Body of pancreas (tissue), 4 donors: ENCODE measurements at regions of chr14 and their contacts with region 1.

Region 1: DNA sequence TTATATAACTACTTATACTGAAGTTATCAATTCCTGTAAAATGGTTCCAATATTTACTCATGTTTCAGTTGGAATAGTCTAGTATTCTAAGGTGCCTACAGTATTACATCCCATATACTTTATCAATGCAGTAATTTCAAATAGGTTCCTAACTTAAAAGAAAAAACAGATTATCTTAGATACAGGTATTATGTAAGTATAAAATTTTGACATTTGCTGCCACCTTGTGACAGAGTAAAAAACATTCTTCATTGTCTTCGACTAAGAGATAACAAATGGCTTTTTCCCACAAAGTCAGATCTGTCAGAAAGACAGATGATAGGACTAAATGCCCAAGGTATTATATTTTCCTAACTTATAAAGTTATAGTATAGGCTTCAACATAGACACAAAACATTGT is 78.7 kb downstream of the TXNDC16 start:
- DNase-seq: no peak
- ATAC-seq: no peak
- H3K4me3 ChIP-seq: no peak overlapping the region
- H3K27ac ChIP-seq: no peak overlapping the region
- H3K4me1 ChIP-seq: no peaks in the 10 kb centered on the region
- H3K27me3 ChIP-seq: no peaks in the 10 kb centered on the region
- CTCF ChIP-seq: peak in 6 of 7 experiments; percentile 5 to 34 (median 20)
- POLR2A ChIP-seq: no peak

Region 2: DNA sequence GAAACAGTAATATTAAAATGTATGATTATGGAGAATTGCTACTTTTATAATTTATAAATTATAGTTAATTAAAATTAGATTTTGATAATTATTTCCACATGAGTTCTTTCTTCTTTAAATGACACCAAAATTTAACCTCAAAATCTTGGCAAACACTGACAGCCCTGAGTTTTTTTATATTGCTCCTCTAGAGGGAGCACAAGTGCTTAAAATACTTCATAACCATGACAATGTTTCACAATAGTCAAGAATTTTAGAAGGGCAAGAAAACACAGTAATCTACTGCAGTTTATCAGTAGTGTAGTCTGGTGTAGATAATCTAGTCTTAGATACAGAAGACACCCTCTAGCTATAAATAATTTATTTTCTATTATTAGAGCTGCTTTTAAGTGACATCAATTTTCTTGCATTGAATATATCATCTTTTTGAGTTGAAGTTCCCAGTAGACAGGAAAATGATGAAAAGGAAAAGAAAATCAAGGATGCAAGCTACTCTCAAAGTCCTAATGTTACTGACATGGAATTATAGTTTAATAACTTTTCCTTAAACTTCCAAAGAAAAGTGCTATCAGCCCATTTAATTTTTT is 173.8 kb before region 1 on chr14:
- intact Hi-C with region 1: loop called (anchors 10 kb)
- DNase-seq: peak in 1 of 4 donors; percentile 15
- ATAC-seq: peak; percentile 68
- H3K4me3 ChIP-seq: no peak overlapping the region
- H3K27ac ChIP-seq: no peak overlapping the region
- H3K4me1 ChIP-seq: no peaks in the 10 kb centered on the region
- H3K27me3 ChIP-seq: no peaks in the 10 kb centered on the region
- CTCF ChIP-seq: peak; percentile 51 to 77 (median 61)
- POLR2A ChIP-seq: no peak

Region 3: DNA sequence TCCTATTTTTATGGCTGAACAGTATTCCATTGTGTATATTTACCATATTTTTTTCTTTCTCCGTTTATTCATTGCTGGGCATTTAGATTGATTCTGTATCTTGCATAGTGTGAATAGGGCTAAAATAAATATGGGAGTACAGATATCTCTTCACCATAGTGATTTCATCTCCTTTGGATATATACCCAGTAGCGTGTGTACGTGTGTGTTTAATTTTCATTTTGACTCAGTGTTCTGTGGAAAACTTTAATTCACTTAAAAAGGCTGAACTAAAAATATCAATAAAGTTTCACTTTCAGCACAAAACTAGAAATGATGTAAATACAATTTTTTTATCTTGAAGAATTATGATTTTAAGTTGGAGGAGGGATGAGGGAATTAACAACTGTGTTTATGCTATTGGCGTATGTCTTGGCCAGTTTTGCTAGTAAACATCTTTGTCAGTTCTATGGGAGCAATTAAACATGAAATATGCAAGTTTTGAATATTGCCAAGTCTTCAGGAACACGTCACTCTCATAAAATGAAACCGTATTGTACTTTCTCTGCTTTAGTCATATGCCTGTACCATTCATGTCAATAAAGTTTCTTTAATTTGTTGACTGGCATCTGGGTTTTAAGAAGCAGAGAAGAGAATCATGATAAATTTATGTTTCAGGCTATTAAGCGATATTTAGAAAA is 59.7 kb before region 1 on chr14:
- intact Hi-C with region 1: no loop called
- DNase-seq: no peak
- ATAC-seq: no peak
- H3K4me3 ChIP-seq: no peak overlapping the region
- H3K27ac ChIP-seq: no peak overlapping the region
- H3K4me1 ChIP-seq: no peaks in the 10 kb centered on the region
- H3K27me3 ChIP-seq: no peaks in the 10 kb centered on the region
- CTCF ChIP-seq: no peak
- POLR2A ChIP-seq: no peak